ENCODE measurements at regions of chr1 and their contacts with region 1.

Region 1: GRCh38 chr1:35377555-35377954 is 109.0 kb downstream of the ZMYM4 start:
- DNase-seq: no peak
- ATAC-seq: no peak
- H3K4me3 ChIP-seq: no peak overlapping the region
- H3K4me3 Mint-ChIP-seq: no peak overlapping the region
- H3K27ac ChIP-seq: no peak overlapping the region
- H3K27ac Mint-ChIP-seq: no peak overlapping the region
- H3K4me1 ChIP-seq: no peaks in the 10 kb centered on the region
- H3K4me1 Mint-ChIP-seq: no peaks in the 10 kb centered on the region
- H3K27me3 ChIP-seq: no peaks in the 10 kb centered on the region
- H3K27me3 Mint-ChIP-seq: no peaks in the 10 kb centered on the region

Region 2: DNA sequence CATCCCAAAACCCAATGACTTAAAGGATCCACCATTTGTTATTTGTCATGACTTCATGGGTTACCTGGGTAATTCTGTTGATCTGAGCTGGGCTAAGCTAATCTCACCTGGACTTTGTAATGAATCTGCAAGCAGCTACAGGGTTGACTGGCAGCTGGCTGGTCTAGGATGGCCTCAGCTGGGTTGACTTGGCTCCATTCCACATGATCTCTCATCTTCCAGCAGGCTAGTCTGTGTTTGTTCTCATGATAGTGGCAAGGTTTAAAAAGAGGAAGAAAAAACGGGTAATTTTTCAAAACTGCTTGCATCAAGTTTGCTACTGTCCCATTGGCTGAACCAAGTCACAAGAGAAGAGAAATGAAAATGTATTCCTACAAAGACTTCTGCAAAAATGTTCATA is 133.9 kb before region 1 on chr1:
- CTCF ChIA-PET with region 1: no interaction called
- POLR2A ChIA-PET with region 1: interaction called in 1 of 2 experiments, 11 read pairs
- DNase-seq: no peak
- ATAC-seq: no peak
- H3K4me3 ChIP-seq: no peak overlapping the region
- H3K4me3 Mint-ChIP-seq: no peak overlapping the region
- H3K27ac ChIP-seq: no peak overlapping the region
- H3K27ac Mint-ChIP-seq: no peak overlapping the region
- H3K4me1 ChIP-seq: no peaks in the 10 kb centered on the region
- H3K4me1 Mint-ChIP-seq: no peaks in the 10 kb centered on the region
- H3K27me3 ChIP-seq: no peaks in the 10 kb centered on the region
- H3K27me3 Mint-ChIP-seq: no peaks in the 10 kb centered on the region

Region 3: GRCh38 chr1:35285771-35286608 is 91.6 kb before region 1 on chr1:
- CTCF ChIA-PET with region 1: interaction called in 1 of 2 experiments, 10 read pairs
- POLR2A ChIA-PET with region 1: no interaction called
- DNase-seq: peak in 3 of 35 experiments; percentile 2 to 52 (median 12)
- ATAC-seq: peak; percentile 75 to 92 (median 86)
- H3K4me3 ChIP-seq: peak overlapping the region in 1 of 2 donors; percentile 32
- H3K4me3 Mint-ChIP-seq: peak overlapping the region; percentile 3 to 39 (median 34)
- H3K27ac ChIP-seq: peak overlapping the region; percentile 47
- H3K27ac Mint-ChIP-seq: peak overlapping the region; percentile 75
- H3K4me1 ChIP-seq: peaks cover 7 to 34% of the 10 kb centered on the region in 2 experiments
- H3K4me1 Mint-ChIP-seq: peaks cover 37 to 53% (median 45%) of the 10 kb centered on the region in 3 donors
- H3K27me3 ChIP-seq: no peaks in the 10 kb centered on the region
- H3K27me3 Mint-ChIP-seq: no peaks in the 10 kb centered on the region

Region 4: GRCh38 chr1:35499652-35500176 is 122.2 kb after region 1 on chr1:
- CTCF ChIA-PET with region 1: no interaction called
- POLR2A ChIA-PET with region 1: no interaction called
- DNase-seq: peak in 30 of 35 experiments; percentile 5 to 62 (median 25)
- ATAC-seq: peak; percentile 64 to 97 (median 86)
- H3K4me3 ChIP-seq: no peak overlapping the region
- H3K4me3 Mint-ChIP-seq: no peak overlapping the region
- H3K27ac ChIP-seq: peak overlapping the region; percentile 72
- H3K27ac Mint-ChIP-seq: peak overlapping the region; percentile 89 to 90
- H3K4me1 ChIP-seq: peaks cover 11 to 14% of the 10 kb centered on the region in 2 experiments
- H3K4me1 Mint-ChIP-seq: peaks cover 47 to 51% (median 49%) of the 10 kb centered on the region in 3 donors
- H3K27me3 ChIP-seq: no peaks in the 10 kb centered on the region
- H3K27me3 Mint-ChIP-seq: no peaks in the 10 kb centered on the region

Measured in T-cell (primary cell).